Right cardiac atrium (tissue), 5 donors: ENCODE measurements at regions of chr2 and their contacts with region 1.

Region 1: GRCh38 chr2:217785544-217786045 is 217.2 kb downstream of the TNS1 start:
- DNase-seq: peak; percentile 71 to 92 (median 91)
- ATAC-seq: peak; percentile 74 to 76
- H3K4me3 ChIP-seq: no peak overlapping the region
- H3K27ac ChIP-seq: no peak overlapping the region
- H3K4me1 ChIP-seq: no peaks in the 10 kb centered on the region
- H3K27me3 ChIP-seq: no peaks in the 10 kb centered on the region

Region 2: GRCh38 chr2:217836901-217837491 is 51.4 kb after region 1 on chr2:
- intact Hi-C with region 1: no loop called
- DNase-seq: peak; percentile 89 to 93 (median 92)
- ATAC-seq: peak; percentile 64 to 75
- H3K4me3 ChIP-seq: no peak overlapping the region
- H3K27ac ChIP-seq: peak overlapping the region; percentile 96
- H3K4me1 ChIP-seq: peaks cover 73% of the 10 kb centered on the region
- H3K27me3 ChIP-seq: no peaks in the 10 kb centered on the region

Region 3: GRCh38 chr2:217886720-217887309 is 101.2 kb after region 1 on chr2:
- intact Hi-C with region 1: loop called in 3 of 4 experiments (anchors 2 to 5 kb)
- DNase-seq: peak; percentile 79 to 85 (median 80)
- ATAC-seq: peak; percentile 26 to 28
- H3K4me3 ChIP-seq: no peak overlapping the region
- H3K27ac ChIP-seq: peak overlapping the region; percentile 42
- H3K4me1 ChIP-seq: peaks cover 31% of the 10 kb centered on the region
- H3K27me3 ChIP-seq: no peaks in the 10 kb centered on the region

Region 4: DNA sequence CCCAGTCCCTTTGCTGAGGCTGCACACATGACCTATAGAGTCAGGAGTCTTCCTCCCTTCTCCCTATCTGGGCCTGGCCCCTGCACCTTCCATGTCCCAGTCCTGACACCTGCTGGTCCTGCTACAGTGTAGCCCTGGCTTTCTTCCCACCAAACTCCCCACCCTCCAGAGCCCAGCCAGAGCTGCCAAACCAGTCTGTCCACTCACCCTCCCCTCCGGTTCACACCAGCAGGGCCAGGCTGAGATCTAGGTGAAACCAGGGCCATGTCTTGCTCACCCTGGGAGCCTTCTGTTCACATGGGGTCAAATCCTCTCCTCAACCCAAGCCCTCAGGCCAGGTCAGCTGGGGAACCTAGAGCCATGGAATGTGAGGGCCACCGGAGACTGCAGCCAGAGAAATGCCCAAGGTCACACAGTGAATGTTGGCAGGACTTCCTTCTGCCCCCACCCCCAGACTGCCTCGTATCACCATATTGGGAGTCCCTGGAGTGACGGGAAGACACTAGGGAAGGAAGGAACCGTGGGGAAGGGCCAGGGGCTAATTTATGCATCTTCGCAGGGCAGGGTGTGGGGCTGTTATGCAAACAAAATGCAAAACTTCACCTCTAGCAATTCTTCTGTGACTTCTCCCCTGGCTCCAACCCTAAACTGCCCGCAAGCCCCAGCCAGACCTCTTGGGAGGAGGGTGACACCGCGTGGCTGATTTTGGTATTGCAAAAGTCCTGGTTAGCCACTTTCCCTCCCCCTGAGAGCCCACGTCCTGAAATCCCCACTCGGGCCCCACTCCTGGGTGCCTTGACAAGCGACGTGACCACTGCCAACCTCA is 202.6 kb after region 1 on chr2:
- intact Hi-C with region 1: loop called in 3 of 4 experiments (anchors 2 to 5 kb)
- DNase-seq: peak; percentile 82 to 94 (median 92)
- ATAC-seq: peak; percentile 80 to 85
- H3K4me3 ChIP-seq: no peak overlapping the region
- H3K27ac ChIP-seq: peak overlapping the region; percentile 63
- H3K4me1 ChIP-seq: peaks cover 7% of the 10 kb centered on the region
- H3K27me3 ChIP-seq: no peaks in the 10 kb centered on the region

Region 5: DNA sequence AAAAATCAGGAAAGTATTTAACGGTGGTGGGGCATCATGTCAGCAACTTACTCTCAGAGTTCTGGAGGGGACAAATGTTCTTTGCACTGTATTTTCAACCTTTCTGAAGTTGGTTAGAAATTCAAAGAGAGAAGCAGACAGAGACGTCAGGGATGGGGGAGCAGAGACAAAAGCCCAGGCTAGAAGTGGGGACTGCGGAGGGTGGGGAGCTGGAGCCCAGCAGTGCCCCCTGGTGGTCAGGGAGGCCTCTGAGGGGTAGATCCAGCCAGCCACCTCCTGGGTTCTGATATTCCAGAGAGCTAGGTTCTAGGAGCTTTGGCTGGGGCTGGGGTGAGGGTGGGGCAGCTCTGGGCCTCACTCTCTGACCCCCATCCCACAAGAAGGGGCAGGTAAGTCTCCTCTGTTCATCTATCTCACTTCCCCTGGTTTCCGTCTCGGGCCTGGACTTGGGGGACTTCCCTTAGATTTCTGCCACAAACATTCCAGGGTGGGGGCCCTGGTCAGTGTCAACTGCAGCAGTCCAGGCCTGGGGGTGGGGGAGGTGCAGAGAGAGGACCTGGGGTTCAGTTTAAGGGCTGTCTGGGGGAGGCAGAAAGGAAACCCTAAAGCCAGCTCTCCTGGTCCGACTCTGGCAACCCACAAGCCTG is 208.3 kb after region 1 on chr2:
- intact Hi-C with region 1: loop called (anchors 2 to 5 kb)
- DNase-seq: peak; percentile 75 to 89 (median 89)
- ATAC-seq: peak; percentile 40 to 58
- H3K4me3 ChIP-seq: no peak overlapping the region
- H3K27ac ChIP-seq: no peak overlapping the region
- H3K4me1 ChIP-seq: no peaks in the 10 kb centered on the region
- H3K27me3 ChIP-seq: no peaks in the 10 kb centered on the region

Region 6: DNA sequence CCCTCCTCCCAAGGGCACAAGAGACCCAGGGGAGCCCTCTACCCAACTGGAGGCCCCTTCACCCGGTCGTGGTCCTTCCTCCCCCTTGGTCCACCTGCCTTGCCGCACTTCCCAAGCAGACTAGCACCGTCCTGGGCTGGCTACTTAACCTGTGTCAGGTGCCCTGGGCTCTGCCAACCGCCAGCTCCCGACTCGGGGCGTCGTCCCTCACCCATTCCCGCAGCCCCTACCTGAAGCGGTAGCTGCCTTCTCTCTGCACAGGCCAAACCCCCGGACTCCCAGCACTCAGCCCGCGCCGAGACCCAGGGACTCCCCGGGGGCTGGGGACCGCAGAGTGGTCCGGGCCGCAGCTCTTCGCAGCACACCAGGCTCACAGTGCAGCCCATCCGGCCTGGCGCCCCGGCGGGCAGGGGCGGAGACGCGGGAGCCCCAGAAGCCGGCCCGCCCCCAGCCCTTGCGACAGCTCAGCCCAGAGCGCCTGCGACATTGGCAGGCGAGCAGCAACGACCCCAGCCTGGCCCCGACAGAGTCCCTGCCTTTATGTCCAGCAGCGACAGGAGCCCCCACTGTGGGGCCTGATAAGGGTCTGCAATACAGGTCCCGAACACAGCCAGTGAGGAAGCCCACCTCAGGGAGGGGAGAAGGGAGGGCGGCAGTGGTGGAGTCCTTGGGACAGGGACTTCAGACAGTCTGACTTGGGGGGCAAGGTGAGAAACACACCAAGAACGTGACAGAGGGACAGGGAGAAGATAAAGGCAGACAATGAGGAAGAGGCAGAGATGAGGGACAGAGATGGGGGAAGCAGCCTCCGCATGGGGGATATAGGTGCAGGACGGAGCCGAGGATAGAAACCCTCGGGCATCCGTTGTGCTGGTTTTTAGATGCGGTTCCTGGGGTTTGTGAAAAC is 248.2 kb after region 1 on chr2:
- intact Hi-C with region 1: loop called (anchors 2 to 10 kb)
- DNase-seq: peak in 2 of 3 donors; percentile 78 to 79
- ATAC-seq: peak; percentile 15 to 58
- H3K4me3 ChIP-seq: no peak overlapping the region
- H3K27ac ChIP-seq: no peak overlapping the region
- H3K4me1 ChIP-seq: peaks cover 5% of the 10 kb centered on the region
- H3K27me3 ChIP-seq: no peaks in the 10 kb centered on the region

Region 7: GRCh38 chr2:218063486-218063885 is 277.9 kb after region 1 on chr2:
- intact Hi-C with region 1: loop called in 3 of 4 experiments (anchors 2 to 10 kb)
- DNase-seq: no peak
- ATAC-seq: no peak
- H3K4me3 ChIP-seq: no peak overlapping the region
- H3K27ac ChIP-seq: no peak overlapping the region
- H3K4me1 ChIP-seq: no peaks in the 10 kb centered on the region
- H3K27me3 ChIP-seq: no peaks in the 10 kb centered on the region

Region 8: GRCh38 chr2:218069606-218070300 is 284.2 kb after region 1 on chr2:
- intact Hi-C with region 1: loop called in 3 of 4 experiments (anchors 2 to 10 kb)
- DNase-seq: no peak
- ATAC-seq: no peak
- H3K4me3 ChIP-seq: no peak overlapping the region
- H3K27ac ChIP-seq: no peak overlapping the region
- H3K4me1 ChIP-seq: no peaks in the 10 kb centered on the region
- H3K27me3 ChIP-seq: no peaks in the 10 kb centered on the region